ENCODE measurements at regions of chr18 and their contacts with region 1.

Region 1: DNA sequence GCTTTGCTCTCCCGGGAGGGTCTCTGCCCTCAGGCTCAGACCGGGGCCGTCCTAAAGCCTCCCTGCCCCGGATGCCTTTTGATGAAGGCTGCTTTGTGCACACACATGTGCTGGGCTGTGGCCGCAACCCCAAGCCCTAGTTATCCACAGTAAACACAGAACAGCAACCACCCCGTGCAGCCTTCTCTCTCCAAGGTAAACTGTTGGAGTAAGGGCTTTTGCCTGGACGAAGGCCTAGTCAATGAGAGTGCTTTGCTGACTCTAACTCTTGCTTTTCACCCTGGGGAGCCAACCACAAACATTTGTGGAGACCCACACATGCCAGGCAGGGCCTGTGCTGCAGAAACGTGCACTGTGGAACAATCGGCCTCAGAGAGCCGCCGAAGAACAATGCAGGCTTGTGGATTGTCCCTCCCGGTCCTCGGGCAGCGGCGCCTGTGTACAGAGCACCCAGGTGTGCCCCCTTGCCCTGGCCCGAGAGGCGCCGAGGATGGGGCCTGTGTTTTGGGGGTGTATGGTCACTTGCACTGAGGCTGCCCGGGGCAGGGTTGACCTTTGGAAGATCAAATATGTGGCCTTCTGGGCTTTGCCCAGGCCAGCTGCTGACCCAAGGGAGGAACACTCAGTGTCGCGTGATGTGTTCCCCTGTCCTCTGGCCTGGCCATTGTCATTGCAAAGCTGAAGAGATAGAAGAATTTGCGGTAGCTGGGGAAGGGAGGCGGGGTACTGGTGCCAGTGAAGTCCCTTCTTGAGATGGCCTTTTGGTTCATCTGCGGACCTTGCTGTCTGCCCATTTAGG is 37.0 kb downstream of the CTIF start:
- DNase-seq: peak; percentile 92
- ATAC-seq: peak; percentile 89
- H3K4me3 ChIP-seq: peak overlapping the region; percentile 38 to 64 (median 40)
- H3K27ac ChIP-seq: peak overlapping the region; percentile 94
- H3K4me1 ChIP-seq: peaks cover 81% of the 10 kb centered on the region
- H3K27me3 ChIP-seq: no peaks in the 10 kb centered on the region
- CTCF ChIP-seq: no peak
- EP300 ChIP-seq: peak; percentile 75 to 77; a peak in 2 of 4 replicates
- POLR2A ChIP-seq: peak in 1 of 2 experiments; percentile 53; a peak in 2 of 4 replicates
- RAD21 ChIP-seq: no peak

Region 2: DNA sequence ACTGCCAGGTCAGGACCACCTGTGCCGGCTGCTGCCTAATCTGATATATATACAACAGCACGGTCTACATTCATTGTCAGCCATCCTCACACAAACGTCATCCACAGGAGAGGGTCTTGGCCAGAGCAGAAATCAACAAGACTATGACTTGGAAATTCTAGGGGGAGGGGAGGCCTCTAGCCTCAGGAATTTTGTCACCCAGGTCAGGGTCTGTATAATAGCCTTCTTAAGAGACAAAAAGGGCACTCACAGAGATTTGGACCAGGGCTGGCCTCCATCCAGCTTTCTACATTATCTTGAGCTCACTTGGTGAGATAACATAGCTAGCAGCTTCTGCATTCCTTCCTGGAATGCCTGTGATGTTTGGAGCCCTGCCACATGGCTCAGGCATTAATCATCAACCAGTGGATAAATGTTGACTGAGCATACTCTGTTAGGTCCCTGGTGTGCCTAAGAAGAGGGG is 87.4 kb before region 1 on chr18:
- CTCF ChIA-PET with region 1: no interaction called
- POLR2A ChIA-PET with region 1: interaction called, 14 read pairs
- in situ Hi-C with region 1: no loop called
- intact Hi-C with region 1: loop called (anchors 1 kb)
- DNase-seq: peak; percentile 97
- ATAC-seq: peak; percentile 100
- H3K4me3 ChIP-seq: peak overlapping the region in 2 of 3 experiments; percentile 17 to 29; a peak in 1 of 6 replicates
- H3K27ac ChIP-seq: peak overlapping the region; percentile 57
- H3K4me1 ChIP-seq: peaks cover 65% of the 10 kb centered on the region
- H3K27me3 ChIP-seq: no peaks in the 10 kb centered on the region
- CTCF ChIP-seq: no peak
- EP300 ChIP-seq: peak in 1 of 2 experiments; percentile 85; a peak in 2 of 4 replicates
- POLR2A ChIP-seq: no peak
- RAD21 ChIP-seq: no peak

Region 3: DNA sequence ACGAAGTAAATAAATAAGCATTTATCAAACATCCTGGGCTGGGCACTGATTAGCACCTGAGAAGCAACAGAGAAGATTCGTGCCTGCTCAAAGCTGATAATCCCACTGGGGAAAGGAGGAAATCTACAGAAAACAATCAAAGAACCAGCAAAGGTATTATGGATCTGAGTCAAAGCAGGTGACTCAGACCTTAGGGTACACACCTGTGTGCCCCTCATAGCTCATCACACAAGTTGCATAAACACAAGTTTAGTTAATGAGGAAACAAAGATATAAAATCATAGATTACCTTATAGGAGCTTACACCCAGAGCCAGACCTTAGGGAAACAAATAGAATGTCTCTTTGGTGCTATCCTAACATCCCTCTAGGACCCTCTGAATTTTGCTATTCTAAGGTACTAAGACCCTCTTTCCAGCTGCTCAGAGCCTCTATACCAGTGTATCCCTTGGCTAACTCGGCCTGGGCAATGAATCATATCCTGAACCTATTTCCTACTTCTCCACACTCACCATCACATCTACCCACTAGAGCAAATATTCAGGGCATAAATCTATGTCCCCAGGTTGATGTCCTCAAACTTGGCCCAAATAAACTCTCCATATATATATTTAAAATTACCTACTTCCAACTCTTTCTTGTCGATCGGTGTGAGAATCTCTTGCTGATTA is 56.3 kb before region 1 on chr18:
- CTCF ChIA-PET with region 1: no interaction called
- POLR2A ChIA-PET with region 1: no interaction called
- in situ Hi-C with region 1: no loop called
- intact Hi-C with region 1: no loop called
- DNase-seq: no peak
- ATAC-seq: no peak
- H3K4me3 ChIP-seq: no peak overlapping the region
- H3K27ac ChIP-seq: no peak overlapping the region
- H3K4me1 ChIP-seq: peaks cover 6% of the 10 kb centered on the region; the same call in 1 of the 2 replicates
- H3K27me3 ChIP-seq: peaks cover 2 to 10% of the 10 kb centered on the region in 2 experiments; a peak in 3 of 5 replicates
- CTCF ChIP-seq: no peak
- EP300 ChIP-seq: no peak
- POLR2A ChIP-seq: no peak
- RAD21 ChIP-seq: no peak

Region 4: GRCh38 chr18:48605408-48605845 is 29.6 kb after region 1 on chr18:
- CTCF ChIA-PET with region 1: no interaction called
- POLR2A ChIA-PET with region 1: interaction called, 3 read pairs
- in situ Hi-C with region 1: no loop called
- intact Hi-C with region 1: loop called (anchors 2 kb)
- DNase-seq: peak; percentile 73
- ATAC-seq: peak; percentile 99
- H3K4me3 ChIP-seq: no peak overlapping the region
- H3K27ac ChIP-seq: no peak overlapping the region
- H3K4me1 ChIP-seq: peaks cover 34% of the 10 kb centered on the region
- H3K27me3 ChIP-seq: no peaks in the 10 kb centered on the region
- CTCF ChIP-seq: peak; percentile 88
- EP300 ChIP-seq: peak in 1 of 2 experiments; percentile 13; a peak in 1 of 4 replicates
- POLR2A ChIP-seq: no peak
- RAD21 ChIP-seq: peak; percentile 92

Region 5: GRCh38 chr18:48629730-48630324 is 54.0 kb after region 1 on chr18:
- CTCF ChIA-PET with region 1: no interaction called
- POLR2A ChIA-PET with region 1: interaction called, 4 read pairs
- in situ Hi-C with region 1: no loop called
- intact Hi-C with region 1: loop called (anchors 5 kb)
- DNase-seq: peak; percentile 87
- ATAC-seq: peak; percentile 94
- H3K4me3 ChIP-seq: no peak overlapping the region
- H3K27ac ChIP-seq: peak overlapping the region; percentile 65
- H3K4me1 ChIP-seq: peaks cover 75% of the 10 kb centered on the region
- H3K27me3 ChIP-seq: no peaks in the 10 kb centered on the region
- CTCF ChIP-seq: no peak
- EP300 ChIP-seq: no peak
- POLR2A ChIP-seq: no peak
- RAD21 ChIP-seq: no peak

Region 6: DNA sequence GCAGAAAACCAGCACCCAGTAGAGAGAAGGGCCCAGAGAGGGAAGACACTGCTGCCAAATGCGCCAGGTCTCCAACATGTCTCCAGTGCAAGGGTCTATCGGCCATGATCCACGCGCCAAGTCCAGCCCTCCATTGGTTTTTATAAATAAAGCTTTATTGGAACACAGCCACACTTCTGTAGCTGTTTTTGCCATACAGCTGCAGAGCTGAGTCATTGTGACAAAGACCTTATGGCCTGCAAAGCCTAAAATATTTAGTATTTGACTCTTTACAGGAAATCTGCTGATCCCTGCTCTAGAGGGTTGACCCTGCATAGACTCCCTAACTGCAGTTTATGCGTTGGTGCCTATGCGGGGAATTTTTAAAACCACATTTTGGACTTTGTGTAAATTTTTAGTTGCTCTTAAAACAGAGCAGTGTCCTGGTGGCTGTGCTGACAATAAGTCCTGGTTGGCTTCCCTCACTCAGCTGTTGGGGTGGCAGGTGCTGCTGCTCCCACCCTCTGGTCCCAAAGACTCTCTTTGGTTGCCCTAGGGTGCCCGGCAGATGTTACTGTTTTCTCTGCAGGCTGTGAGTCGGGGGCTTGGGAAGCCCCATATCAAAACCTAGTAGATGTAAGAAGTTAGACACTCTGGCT is 117.9 kb after region 1 on chr18:
- CTCF ChIA-PET with region 1: no interaction called
- POLR2A ChIA-PET with region 1: no interaction called
- in situ Hi-C with region 1: no loop called
- intact Hi-C with region 1: no loop called
- DNase-seq: no peak
- ATAC-seq: no peak
- H3K4me3 ChIP-seq: no peak overlapping the region
- H3K27ac ChIP-seq: no peak overlapping the region
- H3K4me1 ChIP-seq: peaks cover 8% of the 10 kb centered on the region
- H3K27me3 ChIP-seq: no peaks in the 10 kb centered on the region
- CTCF ChIP-seq: no peak
- EP300 ChIP-seq: no peak
- POLR2A ChIP-seq: no peak
- RAD21 ChIP-seq: no peak

Region 7: DNA sequence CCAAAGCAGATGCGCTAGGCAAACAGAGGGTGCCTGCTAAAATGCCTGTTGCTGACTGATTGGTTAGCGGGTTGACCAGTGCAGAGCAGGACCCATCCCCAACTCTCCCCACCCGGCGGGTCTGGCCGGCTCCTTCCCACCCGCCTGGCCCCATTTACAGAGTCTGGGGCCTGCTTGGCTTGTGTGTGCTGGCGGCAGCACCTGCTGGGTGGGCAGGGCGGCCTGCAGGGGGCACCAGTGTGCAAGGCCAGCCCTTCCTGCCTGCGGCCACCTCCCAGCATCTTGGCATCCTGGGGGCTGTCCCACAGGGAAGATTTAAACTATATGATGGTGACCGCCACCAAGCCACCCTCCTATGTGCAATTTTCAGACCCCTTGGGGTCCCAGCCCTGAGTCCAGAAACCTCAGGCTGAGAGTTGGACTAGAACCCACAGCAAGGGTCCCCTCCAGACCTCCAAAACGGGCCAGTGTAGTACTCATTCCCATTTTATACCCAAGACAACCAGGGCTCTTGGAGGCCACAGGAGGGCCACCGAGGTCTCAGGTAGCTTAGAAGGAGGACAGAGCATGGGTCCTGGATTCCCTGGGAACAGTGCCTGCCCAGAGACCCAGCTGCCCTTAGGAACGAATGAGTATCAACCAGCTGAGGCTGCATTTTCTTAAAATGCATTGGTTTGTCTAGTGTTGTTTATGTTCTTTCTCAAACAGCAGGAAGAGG is 201.3 kb after region 1 on chr18:
- CTCF ChIA-PET with region 1: no interaction called
- POLR2A ChIA-PET with region 1: no interaction called
- in situ Hi-C with region 1: no loop called
- intact Hi-C with region 1: no loop called
- DNase-seq: peak; percentile 44
- ATAC-seq: peak; percentile 48
- H3K4me3 ChIP-seq: no peak overlapping the region
- H3K27ac ChIP-seq: no peak overlapping the region
- H3K4me1 ChIP-seq: peaks cover 44% of the 10 kb centered on the region
- H3K27me3 ChIP-seq: no peaks in the 10 kb centered on the region
- CTCF ChIP-seq: peak; percentile 91
- EP300 ChIP-seq: no peak
- POLR2A ChIP-seq: no peak
- RAD21 ChIP-seq: peak; percentile 95

Measured in HepG2 (cell line).